Activated naive CD4-positive, alpha-beta T cell treated with anti-CD3 and anti-CD28 coated beads for 36 hours (primary cell): ENCODE measurements at regions of chr4 and their contacts with region 1.

Region 1: DNA sequence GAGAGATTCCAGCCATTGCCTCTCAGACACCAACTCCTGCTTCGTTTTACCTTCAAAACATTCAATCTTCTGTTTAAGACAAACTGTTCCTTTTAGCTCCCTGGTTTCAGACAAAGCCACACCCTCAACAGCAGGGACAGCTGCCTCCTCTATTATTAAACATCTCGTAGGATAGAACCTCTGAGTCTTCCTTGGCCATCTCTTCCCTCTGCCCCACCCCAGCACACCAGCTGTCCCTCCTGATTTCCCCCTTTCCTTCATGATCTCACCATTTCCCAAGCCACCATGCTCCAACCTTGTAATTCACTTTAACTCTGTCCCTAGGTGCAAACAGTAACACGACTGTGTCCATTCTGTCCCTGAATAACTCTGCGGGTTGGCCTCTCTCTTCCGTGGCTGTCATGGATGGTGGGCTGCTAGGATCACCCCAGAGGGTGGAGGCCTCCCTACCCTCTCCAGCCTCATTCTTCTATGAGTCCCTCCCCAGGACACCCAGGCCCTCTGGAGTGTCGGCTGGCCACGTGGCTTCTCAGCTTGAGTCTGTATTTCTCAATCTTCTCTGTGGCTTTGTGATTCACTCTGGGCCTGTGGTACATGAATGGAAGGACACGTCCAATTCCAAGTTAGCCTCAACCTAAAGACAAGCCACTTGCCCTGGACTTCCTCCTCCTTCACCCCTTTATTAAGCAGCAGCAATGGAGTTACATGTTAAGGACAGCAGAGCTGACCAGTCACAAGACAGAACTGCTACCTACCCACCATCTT is 349.9 kb downstream of the FBXW7 start:
- DNase-seq: no peak
- H3K4me3 Mint-ChIP-seq: no peak overlapping the region
- H3K27ac Mint-ChIP-seq: no peak overlapping the region
- H3K4me1 Mint-ChIP-seq: peaks cover 38% of the 10 kb centered on the region
- H3K27me3 Mint-ChIP-seq: no peaks in the 10 kb centered on the region

Region 2: GRCh38 chr4:152094970-152095700 is 90.8 kb before region 1 on chr4:
- CTCF ChIA-PET with region 1: no interaction called
- intact Hi-C with region 1: loop called (anchors 1 kb)
- DNase-seq: peak; percentile 43
- H3K4me3 Mint-ChIP-seq: no peak overlapping the region
- H3K27ac Mint-ChIP-seq: peak overlapping the region; percentile 69
- H3K4me1 Mint-ChIP-seq: peaks cover 75% of the 10 kb centered on the region
- H3K27me3 Mint-ChIP-seq: no peaks in the 10 kb centered on the region

Region 3: DNA sequence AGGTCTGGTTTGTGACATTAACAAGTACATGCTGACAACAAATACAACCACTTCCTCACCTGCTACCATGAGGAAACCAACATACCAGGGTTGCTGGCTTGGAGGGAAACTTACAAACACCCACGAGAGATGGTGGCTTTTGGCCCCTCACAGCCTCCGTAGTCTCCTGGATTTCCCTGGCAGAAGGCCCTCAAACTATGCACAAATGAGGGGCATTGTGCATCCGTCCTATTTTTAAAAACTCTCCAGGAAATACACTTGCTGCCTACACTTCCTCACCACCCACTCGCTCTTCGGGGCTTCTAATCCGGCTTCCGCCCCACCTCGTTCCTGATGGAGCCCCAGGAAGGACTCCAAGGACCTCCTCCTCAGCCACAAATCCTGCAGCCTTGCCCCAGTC is 70.2 kb before region 1 on chr4:
- CTCF ChIA-PET with region 1: no interaction called
- intact Hi-C with region 1: loop called (anchors 1 kb)
- DNase-seq: peak; percentile 65
- H3K4me3 Mint-ChIP-seq: peak overlapping the region; percentile 56
- H3K27ac Mint-ChIP-seq: peak overlapping the region; percentile 83
- H3K4me1 Mint-ChIP-seq: peaks cover 56% of the 10 kb centered on the region
- H3K27me3 Mint-ChIP-seq: no peaks in the 10 kb centered on the region

Region 4: DNA sequence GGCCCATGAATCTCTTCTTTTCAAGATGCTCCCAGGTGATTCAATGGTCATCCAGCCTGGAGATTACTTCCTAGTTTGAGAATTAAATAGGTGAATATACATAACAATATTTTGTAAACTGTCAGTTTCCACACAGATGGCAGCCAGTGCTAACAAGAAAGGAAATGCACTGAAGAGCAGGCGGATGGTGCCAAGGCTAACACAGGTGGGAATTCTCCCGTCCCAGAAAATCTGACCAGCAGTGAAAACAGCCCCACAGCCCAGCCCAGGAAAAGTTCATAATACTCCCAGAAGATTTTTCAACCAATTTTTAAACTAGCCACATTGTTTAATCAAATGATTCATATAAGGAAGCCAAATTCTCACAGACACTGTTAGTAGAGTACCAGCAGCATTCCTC is 37.9 kb before region 1 on chr4:
- CTCF ChIA-PET with region 1: no interaction called
- intact Hi-C with region 1: no loop called
- DNase-seq: no peak
- H3K4me3 Mint-ChIP-seq: no peak overlapping the region
- H3K27ac Mint-ChIP-seq: no peak overlapping the region
- H3K4me1 Mint-ChIP-seq: no peaks in the 10 kb centered on the region
- H3K27me3 Mint-ChIP-seq: no peaks in the 10 kb centered on the region

Region 5: GRCh38 chr4:152220201-152220666 is 34.3 kb after region 1 on chr4:
- CTCF ChIA-PET with region 1: no interaction called
- intact Hi-C with region 1: loop called (anchors 1 kb)
- DNase-seq: peak; percentile 72
- H3K4me3 Mint-ChIP-seq: no peak overlapping the region
- H3K27ac Mint-ChIP-seq: peak overlapping the region; percentile 41
- H3K4me1 Mint-ChIP-seq: peaks cover 29% of the 10 kb centered on the region
- H3K27me3 Mint-ChIP-seq: no peaks in the 10 kb centered on the region

Region 6: DNA sequence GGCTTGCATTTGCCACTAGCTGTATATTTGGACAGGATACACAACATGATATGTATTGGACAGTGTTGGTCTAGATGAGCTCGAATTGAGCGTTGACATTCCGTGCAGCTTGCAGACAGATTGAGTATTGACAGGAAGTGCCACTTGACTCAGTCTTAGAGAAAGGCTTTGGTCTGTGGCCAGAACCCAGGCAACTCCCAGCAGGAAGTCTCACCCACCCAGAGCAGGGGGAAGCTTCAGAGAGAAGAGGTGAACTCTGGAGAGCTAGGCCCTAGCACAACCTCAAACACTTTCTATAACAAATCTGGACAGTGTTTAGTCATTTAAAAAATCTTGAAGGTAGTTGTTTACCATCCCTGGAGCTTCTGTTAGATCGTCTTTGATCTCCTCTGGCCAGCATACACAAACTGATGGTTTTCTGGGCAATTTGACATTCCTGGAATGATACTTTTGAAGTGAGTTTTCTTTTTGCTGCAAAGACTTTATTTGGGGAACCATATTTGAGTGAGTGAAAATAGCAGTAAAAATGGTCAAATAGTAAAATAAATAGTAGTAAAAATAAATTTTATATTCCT is 69.6 kb after region 1 on chr4:
- CTCF ChIA-PET with region 1: no interaction called
- intact Hi-C with region 1: loop called (anchors 1 kb)
- DNase-seq: peak; percentile 81
- H3K4me3 Mint-ChIP-seq: no peak overlapping the region
- H3K27ac Mint-ChIP-seq: no peak overlapping the region
- H3K4me1 Mint-ChIP-seq: peaks cover 17% of the 10 kb centered on the region
- H3K27me3 Mint-ChIP-seq: no peaks in the 10 kb centered on the region

Region 7: GRCh38 chr4:152525873-152526272 is 339.9 kb after region 1 on chr4:
- CTCF ChIA-PET with region 1: no interaction called
- intact Hi-C with region 1: no loop called
- DNase-seq: no peak
- H3K4me3 Mint-ChIP-seq: no peak overlapping the region
- H3K27ac Mint-ChIP-seq: no peak overlapping the region
- H3K4me1 Mint-ChIP-seq: peaks cover 59% of the 10 kb centered on the region
- H3K27me3 Mint-ChIP-seq: no peaks in the 10 kb centered on the region